ENCODE measurements at regions of chr15 and their contacts with region 1.

Region 1: GRCh38 chr15:87609474-87609873 is 647.1 kb downstream of the NTRK3 start:
- DNase-seq: no peak
- ATAC-seq: no peak
- H3K4me3 ChIP-seq: no peak overlapping the region
- H3K27ac ChIP-seq: no peak overlapping the region
- H3K4me1 ChIP-seq: no peaks in the 10 kb centered on the region
- H3K27me3 ChIP-seq: no peaks in the 10 kb centered on the region
- CTCF ChIP-seq: no peak

Region 2: GRCh38 chr15:87660251-87661129 is 51.0 kb after region 1 on chr15:
- CTCF ChIA-PET with region 1: no interaction called
- POLR2A ChIA-PET with region 1: no interaction called
- in situ Hi-C with region 1: no loop called
- intact Hi-C with region 1: no loop called
- DNase-seq: no peak
- ATAC-seq: no peak
- H3K4me3 ChIP-seq: no peak overlapping the region
- H3K27ac ChIP-seq: no peak overlapping the region
- H3K4me1 ChIP-seq: no peaks in the 10 kb centered on the region
- H3K27me3 ChIP-seq: no peaks in the 10 kb centered on the region
- CTCF ChIP-seq: no peak; the same call in 1 of the 2 replicates

Region 3: GRCh38 chr15:87887177-87887576 is 277.7 kb after region 1 on chr15:
- CTCF ChIA-PET with region 1: no interaction called
- POLR2A ChIA-PET with region 1: interaction called, 10 read pairs
- in situ Hi-C with region 1: no loop called
- intact Hi-C with region 1: no loop called
- DNase-seq: no peak
- ATAC-seq: no peak
- H3K4me3 ChIP-seq: no peak overlapping the region
- H3K27ac ChIP-seq: no peak overlapping the region
- H3K4me1 ChIP-seq: no peaks in the 10 kb centered on the region
- H3K27me3 ChIP-seq: no peaks in the 10 kb centered on the region
- CTCF ChIP-seq: no peak